Activated CD4-positive, alpha-beta memory T cell treated with anti-CD3 and anti-CD28 coated beads for 36 hours (primary cell): ENCODE measurements at regions of chr9 and their contacts with region 1.

Region 1: GRCh38 chr9:19102631-19103345 is at the start of gene HAUS6:
- DNase-seq: peak; percentile 97
- H3K4me3 Mint-ChIP-seq: peak within 1 kb of the TSS; percentile 95
- H3K27ac Mint-ChIP-seq: peak within 1 kb of the TSS; percentile 93
- H3K4me1 Mint-ChIP-seq: peaks cover 22% of the 10 kb centered on the region
- H3K27me3 Mint-ChIP-seq: no peaks in the 10 kb centered on the region
- total RNA-seq, gene HAUS6: 28.7 to 29.8 TPM

Region 2: GRCh38 chr9:19085295-19085694 is 17.5 kb before region 1 on chr9:
- CTCF ChIA-PET with region 1: interaction called, 10 read pairs
- POLR2A ChIA-PET with region 1: interaction called, 3 read pairs
- intact Hi-C with region 1: loop called (anchors 2 kb)
- DNase-seq: no peak
- H3K4me3 Mint-ChIP-seq: no peak overlapping the region
- H3K27ac Mint-ChIP-seq: no peak overlapping the region
- H3K4me1 Mint-ChIP-seq: no peaks in the 10 kb centered on the region
- H3K27me3 Mint-ChIP-seq: no peaks in the 10 kb centered on the region

Region 3: DNA sequence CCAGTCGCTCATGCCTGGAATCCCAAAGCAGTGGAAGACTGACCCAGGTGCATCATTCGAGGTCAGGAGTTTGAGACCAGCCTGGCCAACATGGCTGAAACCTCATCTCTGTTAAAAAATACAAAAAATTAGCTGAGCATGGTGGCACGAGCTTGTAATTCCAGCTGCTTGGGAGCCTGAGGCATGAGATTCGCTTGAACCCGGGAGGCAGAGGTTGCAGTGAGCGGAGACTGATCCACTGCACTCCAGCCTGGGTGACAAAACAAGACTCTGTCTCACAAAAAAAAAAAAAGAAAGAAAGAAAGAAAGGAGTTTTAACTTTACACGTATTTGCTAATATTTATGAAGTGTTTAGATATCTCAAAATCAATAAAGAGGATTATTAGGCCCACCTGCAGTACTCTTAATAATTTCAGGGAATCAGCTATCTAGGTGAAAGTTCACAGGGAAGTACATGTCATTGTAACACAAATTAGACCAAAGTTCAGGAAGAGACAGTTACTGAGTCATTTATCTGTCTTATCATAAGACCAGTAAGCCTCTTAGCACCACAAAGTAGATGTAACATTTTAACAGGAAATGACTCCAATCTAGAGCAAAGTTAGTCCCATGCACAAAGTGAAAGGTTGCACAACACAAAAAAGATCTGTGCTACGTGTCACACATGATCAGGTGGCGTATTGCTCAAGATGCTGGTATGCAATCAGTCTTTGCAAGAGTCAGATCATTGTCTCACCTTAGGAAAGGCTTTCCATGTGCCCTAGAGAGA is 58.7 kb after region 1 on chr9:
- CTCF ChIA-PET with region 1: no interaction called
- POLR2A ChIA-PET with region 1: interaction called, 5 read pairs
- intact Hi-C with region 1: loop called (anchors 1 kb)
- DNase-seq: peak; percentile 73
- H3K4me3 Mint-ChIP-seq: peak overlapping the region; percentile 14
- H3K27ac Mint-ChIP-seq: peak overlapping the region; percentile 76
- H3K4me1 Mint-ChIP-seq: peaks cover 19% of the 10 kb centered on the region
- H3K27me3 Mint-ChIP-seq: no peaks in the 10 kb centered on the region

Region 4: GRCh38 chr9:19230356-19231125 is 127.8 kb after region 1 on chr9 and contains the start of gene DENND4C:
- CTCF ChIA-PET with region 1: no interaction called
- POLR2A ChIA-PET with region 1: interaction called, 3 read pairs
- intact Hi-C with region 1: loop called (anchors 2 kb)
- DNase-seq: peak; percentile 83
- H3K4me3 Mint-ChIP-seq: no peak within 1 kb of the TSS
- H3K27ac Mint-ChIP-seq: peak within 1 kb of the TSS; percentile 62
- H3K4me1 Mint-ChIP-seq: peaks cover 10% of the 10 kb centered on the region
- H3K27me3 Mint-ChIP-seq: no peaks in the 10 kb centered on the region
- total RNA-seq, gene DENND4C: 17.8 to 20.2 TPM

Region 5: DNA sequence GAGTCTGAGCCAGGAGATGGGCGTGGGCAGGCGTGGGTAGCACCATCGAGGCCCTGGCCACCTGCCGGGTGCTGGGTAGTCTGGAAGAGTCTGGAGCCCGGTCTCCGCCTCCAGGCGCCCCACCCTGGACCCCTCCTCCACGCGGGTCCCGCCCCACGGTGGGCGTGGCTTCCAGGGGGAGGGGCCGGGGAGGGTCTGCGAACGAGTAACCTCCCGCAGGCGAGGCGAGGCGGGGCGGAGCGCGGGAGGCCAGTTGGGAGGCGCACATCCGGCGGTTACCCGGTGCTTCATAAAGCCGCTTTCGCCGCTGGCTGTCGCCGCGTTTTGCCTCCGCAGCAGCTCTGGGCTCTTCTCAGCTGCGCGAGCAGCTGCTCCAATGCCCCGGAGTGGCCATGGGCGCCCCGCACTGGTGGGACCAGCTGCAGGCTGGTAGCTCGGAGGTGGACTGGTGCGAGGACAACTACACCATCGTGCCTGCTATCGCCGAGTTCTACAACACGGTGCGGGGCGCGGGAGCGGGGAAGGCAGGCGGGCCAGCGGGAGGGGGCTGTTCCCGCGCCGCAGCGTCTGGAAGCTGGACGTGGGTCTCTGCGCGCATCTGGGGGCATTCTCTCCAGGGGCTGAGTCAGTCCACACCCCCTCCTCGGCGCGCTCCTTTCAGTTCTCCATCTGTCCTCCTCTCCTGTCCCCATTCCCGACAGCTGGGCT is 306.1 kb after region 1 on chr9 and contains the start of gene ACER2:
- CTCF ChIA-PET with region 1: no interaction called
- POLR2A ChIA-PET with region 1: no interaction called
- intact Hi-C with region 1: loop called (anchors 1 kb)
- DNase-seq: peak; percentile 96
- H3K4me3 Mint-ChIP-seq: peak within 1 kb of the TSS; percentile 95
- H3K27ac Mint-ChIP-seq: peak within 1 kb of the TSS; percentile 71
- H3K4me1 Mint-ChIP-seq: peaks cover 12% of the 10 kb centered on the region
- H3K27me3 Mint-ChIP-seq: no peaks in the 10 kb centered on the region
- total RNA-seq, gene ACER2: 1.8 TPM